ENCODE measurements at regions of chr22 and their contacts with region 1.

Region 1: GRCh38 chr22:29154364-29155048 is 51.2 kb upstream of the EMID1 start:
- DNase-seq: peak; percentile 78
- H3K4me3 ChIP-seq: no peak overlapping the region
- H3K27ac ChIP-seq: no peak overlapping the region
- H3K4me1 ChIP-seq: peaks cover 30% of the 10 kb centered on the region
- H3K27me3 ChIP-seq: no peaks in the 10 kb centered on the region
- CTCF ChIP-seq: peak; percentile 99

Region 2: GRCh38 chr22:28855355-28856094 is 299.0 kb before region 1 on chr22:
- CTCF ChIA-PET with region 1: interaction called, 6 read pairs
- POLR2A ChIA-PET with region 1: no interaction called
- intact Hi-C with region 1: loop called (anchors 2 kb)
- DNase-seq: peak; percentile 76
- H3K4me3 ChIP-seq: no peak overlapping the region
- H3K27ac ChIP-seq: no peak overlapping the region
- H3K4me1 ChIP-seq: no peaks in the 10 kb centered on the region
- H3K27me3 ChIP-seq: no peaks in the 10 kb centered on the region
- CTCF ChIP-seq: peak; percentile 95

Region 3: GRCh38 chr22:29072193-29072978 is 82.1 kb before region 1 on chr22:
- CTCF ChIA-PET with region 1: no interaction called
- POLR2A ChIA-PET with region 1: no interaction called
- intact Hi-C with region 1: loop called (anchors 10 kb)
- DNase-seq: peak; percentile 84
- H3K4me3 ChIP-seq: peak overlapping the region; percentile 71
- H3K27ac ChIP-seq: no peak overlapping the region
- H3K4me1 ChIP-seq: peaks cover 6% of the 10 kb centered on the region
- H3K27me3 ChIP-seq: no peaks in the 10 kb centered on the region
- CTCF ChIP-seq: no peak

Region 4: DNA sequence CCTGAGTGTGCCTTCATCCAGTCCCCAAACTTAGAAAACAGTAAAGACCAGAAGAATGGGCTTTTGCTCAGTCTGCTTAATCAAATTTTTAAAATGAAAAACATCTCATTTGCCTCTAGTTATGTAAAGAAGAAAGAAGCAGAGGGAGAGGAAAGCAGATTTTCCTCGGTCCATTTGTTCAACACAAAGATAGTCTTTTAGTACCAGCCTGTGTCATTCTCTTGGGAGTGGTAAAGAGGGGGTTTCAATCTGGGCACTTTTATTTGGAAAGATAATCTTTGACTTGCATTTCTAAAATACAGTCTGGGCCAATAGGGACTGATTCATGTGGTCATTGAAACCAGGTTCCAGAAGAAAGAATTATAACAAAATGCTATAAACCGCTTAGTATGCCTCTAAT is 52.2 kb before region 1 on chr22:
- CTCF ChIA-PET with region 1: interaction called, 4 read pairs
- POLR2A ChIA-PET with region 1: no interaction called
- intact Hi-C with region 1: loop called (anchors 5 kb)
- DNase-seq: peak; percentile 76
- H3K4me3 ChIP-seq: no peak overlapping the region
- H3K27ac ChIP-seq: no peak overlapping the region
- H3K4me1 ChIP-seq: peaks cover 26% of the 10 kb centered on the region
- H3K27me3 ChIP-seq: no peaks in the 10 kb centered on the region
- CTCF ChIP-seq: no peak